CD4-positive, alpha-beta memory T cell (primary cell): ENCODE measurements at regions of chr17 and their contacts with region 1.

Region 1: DNA sequence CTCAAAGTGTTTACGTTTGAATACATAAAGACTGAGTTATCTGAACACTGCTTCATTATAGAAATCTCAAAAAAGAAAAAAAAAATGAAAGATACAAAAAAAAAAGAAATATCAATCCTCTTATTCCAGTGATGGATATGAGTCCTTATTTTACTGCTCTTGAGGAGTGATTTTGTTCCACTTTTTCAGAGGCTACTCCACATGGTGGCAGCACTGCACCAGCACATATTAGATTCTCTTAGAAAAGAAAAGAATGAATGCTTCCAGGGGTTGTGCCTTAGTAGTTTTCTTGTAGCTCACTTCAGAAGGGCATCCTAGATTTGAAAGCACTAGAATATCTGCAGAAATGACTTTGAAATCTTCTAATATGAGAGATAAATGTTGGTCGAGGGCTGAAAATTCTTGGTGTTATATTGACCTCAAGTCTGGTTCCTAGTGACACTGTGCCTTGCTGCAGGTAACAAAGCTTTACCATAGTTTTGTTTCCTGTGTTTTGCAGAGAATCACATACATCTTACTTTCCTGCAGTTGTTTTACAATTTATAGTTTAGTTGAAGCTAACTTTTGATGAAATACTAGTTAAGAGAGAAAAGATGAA is 25.9 kb downstream of the AP2B1 start:
- DNase-seq: peak in 4 of 5 donors; percentile 16 to 24 (median 20)
- H3K4me3 ChIP-seq: no peak overlapping the region
- H3K4me3 Mint-ChIP-seq: no peak overlapping the region
- H3K27ac ChIP-seq: no peak overlapping the region
- H3K27ac Mint-ChIP-seq: peak overlapping the region in 1 of 7 donors; percentile 68
- H3K4me1 ChIP-seq: no peaks in the 10 kb centered on the region
- H3K4me1 Mint-ChIP-seq: peaks cover 0 to 3% (median 3%) of the 10 kb centered on the region in 4 donors
- H3K27me3 ChIP-seq: no peaks in the 10 kb centered on the region
- H3K27me3 Mint-ChIP-seq: no peaks in the 10 kb centered on the region

Region 2: DNA sequence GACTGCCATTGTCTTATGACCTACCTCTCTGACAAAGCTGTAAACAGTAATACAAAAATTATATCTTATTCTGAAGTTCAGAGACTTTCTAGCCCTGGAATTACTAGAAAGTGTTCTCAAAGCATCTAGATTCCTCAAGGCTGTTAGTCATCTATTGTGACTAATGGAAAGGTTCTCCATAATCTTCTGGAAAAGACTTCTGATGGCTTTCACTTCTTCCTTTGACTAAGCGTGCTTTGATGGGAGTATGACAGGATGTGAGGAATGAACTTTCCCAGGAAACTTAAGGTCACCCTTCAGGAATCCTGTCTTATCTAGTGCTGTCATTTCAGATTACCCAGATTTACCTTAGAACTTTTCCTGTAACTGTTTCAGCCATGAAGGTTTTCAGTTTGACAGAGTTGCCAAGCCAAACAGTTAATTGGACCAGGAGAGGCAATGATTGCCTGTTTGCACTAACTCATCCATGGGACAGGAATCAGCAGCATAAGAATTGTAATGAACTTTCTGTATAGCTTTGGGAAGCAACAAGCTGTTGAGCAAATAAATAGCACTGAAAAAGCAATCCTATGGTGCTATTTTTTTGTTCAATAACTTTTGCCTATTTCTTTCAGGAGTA is 17.6 kb after region 1 on chr17:
- CTCF ChIA-PET with region 1: interaction called, 10 read pairs
- POLR2A ChIA-PET with region 1: no interaction called
- intact Hi-C with region 1: no loop called
- DNase-seq: no peak
- H3K4me3 ChIP-seq: no peak overlapping the region
- H3K4me3 Mint-ChIP-seq: no peak overlapping the region
- H3K27ac ChIP-seq: no peak overlapping the region
- H3K27ac Mint-ChIP-seq: peak overlapping the region in 2 of 7 donors; percentile 36 to 37
- H3K4me1 ChIP-seq: no peaks in the 10 kb centered on the region
- H3K4me1 Mint-ChIP-seq: peaks cover 0 to 5% (median 3%) of the 10 kb centered on the region in 4 donors
- H3K27me3 ChIP-seq: no peaks in the 10 kb centered on the region
- H3K27me3 Mint-ChIP-seq: no peaks in the 10 kb centered on the region